ENCODE measurements at regions of chr20 and their contacts with region 1.

Region 1: GRCh38 chr20:45322952-45323383 is 14.9 kb upstream of the MATN4 start:
- DNase-seq: no peak
- H3K4me3 ChIP-seq: no peak overlapping the region
- H3K27ac ChIP-seq: no peak overlapping the region
- H3K4me1 ChIP-seq: no peaks in the 10 kb centered on the region; a peak in 1 of 7 replicates
- H3K27me3 ChIP-seq: no peaks in the 10 kb centered on the region
- CTCF ChIP-seq: peak in 2 of 3 experiments; percentile 42 to 54; a peak in 3 of 4 replicates
- EP300 ChIP-seq: no peak
- POLR2A ChIP-seq: no peak
- RAD21 ChIP-seq: peak; percentile 73 to 82

Region 2: DNA sequence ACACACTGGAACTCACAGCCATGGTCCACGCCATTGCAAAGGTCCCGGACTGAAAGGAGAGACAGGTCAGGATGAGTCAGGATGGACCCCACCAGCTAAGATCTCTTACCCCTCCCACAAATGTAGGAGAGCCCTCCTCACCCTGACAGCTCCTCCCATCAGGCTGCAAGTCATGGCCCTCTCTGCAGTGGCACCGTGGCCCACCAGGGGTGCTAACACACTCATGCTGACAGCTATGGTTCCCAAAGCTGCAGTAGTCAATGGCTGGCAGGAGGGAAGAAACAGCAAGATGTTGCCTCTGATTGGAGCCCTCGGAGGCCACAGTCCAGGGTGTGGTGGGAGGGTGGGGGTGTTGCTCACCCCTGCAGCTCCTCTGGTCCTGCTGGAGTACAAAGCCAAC is 22.0 kb before region 1 on chr20:
- CTCF ChIA-PET with region 1: interaction called, 10 read pairs
- POLR2A ChIA-PET with region 1: no interaction called
- DNase-seq: peak in 1 of 2 experiments; percentile 79
- H3K4me3 ChIP-seq: no peak overlapping the region
- H3K27ac ChIP-seq: no peak overlapping the region
- H3K4me1 ChIP-seq: peaks cover 0 to 5% (median 1%) of the 10 kb centered on the region in 4 experiments; a peak in 2 of 7 replicates
- H3K27me3 ChIP-seq: no peaks in the 10 kb centered on the region; a peak in 1 of 7 replicates
- CTCF ChIP-seq: peak; percentile 57 to 81 (median 77)
- EP300 ChIP-seq: no peak
- POLR2A ChIP-seq: no peak
- RAD21 ChIP-seq: peak in 1 of 2 experiments; percentile 6; a peak in 1 of 4 replicates

Region 3: GRCh38 chr20:45341939-45342859 is 19.2 kb after region 1 on chr20:
- CTCF ChIA-PET with region 1: interaction called, 44 read pairs
- POLR2A ChIA-PET with region 1: interaction called, 15 read pairs
- DNase-seq: peak in 1 of 2 experiments; percentile 63
- H3K4me3 ChIP-seq: peak overlapping the region; percentile 8 to 51 (median 36)
- H3K27ac ChIP-seq: peak overlapping the region; percentile 89
- H3K4me1 ChIP-seq: peaks cover 46 to 87% (median 62%) of the 10 kb centered on the region in 4 experiments
- H3K27me3 ChIP-seq: no peaks in the 10 kb centered on the region
- CTCF ChIP-seq: no peak
- EP300 ChIP-seq: no peak
- POLR2A ChIP-seq: peak in 1 of 2 experiments; percentile 55; a peak in 2 of 3 replicates
- RAD21 ChIP-seq: 0 out of 4 replicates have a peak, but pooled peaks of 1 of the 2 experiments have one; percentile 7

Region 4: GRCh38 chr20:45362804-45363610 is 40.0 kb after region 1 on chr20 and contains the start of gene SYS1:
- CTCF ChIA-PET with region 1: interaction called, 34 read pairs
- POLR2A ChIA-PET with region 1: interaction called, 3 read pairs
- DNase-seq: peak; percentile 97 to 99
- H3K4me3 ChIP-seq: peak within 1 kb of the TSS; percentile 54 to 98 (median 80)
- H3K27ac ChIP-seq: peak within 1 kb of the TSS; percentile 72
- H3K4me1 ChIP-seq: peaks cover 3 to 12% (median 6%) of the 10 kb centered on the region in 4 experiments; a peak in 6 of 7 replicates
- H3K27me3 ChIP-seq: no peaks in the 10 kb centered on the region
- CTCF ChIP-seq: peak; percentile 70 to 91 (median 83)
- EP300 ChIP-seq: peak in 1 of 2 experiments; percentile 52; a peak in 1 of 3 replicates
- POLR2A ChIP-seq: peak in 1 of 2 experiments; percentile 81; a peak in 2 of 3 replicates
- RAD21 ChIP-seq: peak; percentile 82 to 83
- total RNA-seq, gene SYS1: 18.2 and 19.6 TPM in 2 replicates

Region 5: GRCh38 chr20:45450097-45450818 is 127.3 kb after region 1 on chr20:
- CTCF ChIA-PET with region 1: interaction called, 45 read pairs
- POLR2A ChIA-PET with region 1: interaction called, 4 read pairs
- DNase-seq: no peak
- H3K4me3 ChIP-seq: no peak overlapping the region
- H3K27ac ChIP-seq: no peak overlapping the region
- H3K4me1 ChIP-seq: no peaks in the 10 kb centered on the region; a peak in 1 of 7 replicates
- H3K27me3 ChIP-seq: no peaks in the 10 kb centered on the region
- CTCF ChIP-seq: peak in 2 of 3 experiments; percentile 56 to 73; a peak in 3 of 4 replicates
- EP300 ChIP-seq: no peak
- POLR2A ChIP-seq: no peak
- RAD21 ChIP-seq: peak; percentile 43 to 49

Region 6: DNA sequence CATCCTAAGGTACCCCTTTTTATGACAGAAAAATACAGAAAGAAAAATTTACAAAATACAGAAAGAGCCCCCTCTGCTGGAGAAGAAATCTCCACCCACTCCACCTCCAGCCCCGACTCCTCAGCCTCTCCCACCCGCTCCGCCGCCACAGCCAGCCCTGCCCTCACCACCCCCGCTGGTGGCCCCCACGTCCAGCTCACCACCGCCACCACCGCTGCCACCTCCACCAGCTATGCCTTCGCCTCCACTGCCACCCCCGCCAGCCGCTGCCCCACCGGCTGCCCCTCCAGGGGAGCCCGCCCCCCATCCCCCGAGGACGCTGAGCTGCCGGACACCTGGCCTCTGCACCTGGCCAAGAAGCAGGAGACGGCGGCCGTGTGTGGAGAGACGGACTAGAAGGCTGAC is 164.3 kb after region 1 on chr20:
- CTCF ChIA-PET with region 1: interaction called, 14 read pairs
- POLR2A ChIA-PET with region 1: no interaction called
- DNase-seq: peak in 1 of 2 experiments; percentile 77
- H3K4me3 ChIP-seq: peak overlapping the region; percentile 38 to 60 (median 43)
- H3K27ac ChIP-seq: no peak overlapping the region
- H3K4me1 ChIP-seq: peaks cover 0 to 11% (median 0%) of the 10 kb centered on the region in 4 experiments; a peak in 2 of 7 replicates
- H3K27me3 ChIP-seq: no peaks in the 10 kb centered on the region
- CTCF ChIP-seq: peak; percentile 26 to 46 (median 46); a peak in 3 of 4 replicates
- EP300 ChIP-seq: no peak
- POLR2A ChIP-seq: no peak
- RAD21 ChIP-seq: peak; percentile 37 to 46

Measured in H1 (cell line).